Psoas muscle (tissue), 8 donors: ENCODE measurements at regions of chr13 and their contacts with region 1.

Region 1: GRCh38 chr13:24693862-24694471 is 13.8 kb downstream of the ATP12A start:
- DNase-seq: peak in 1 of 2 donors; percentile 36
- ATAC-seq: peak; percentile 58 to 82 (median 81)
- H3K4me3 ChIP-seq: no peak overlapping the region
- H3K27ac ChIP-seq: no peak overlapping the region
- H3K4me1 ChIP-seq: no peaks in the 10 kb centered on the region
- H3K27me3 ChIP-seq: peaks cover 0 to 12% (median 0%) of the 10 kb centered on the region in 3 donors
- CTCF ChIP-seq: peak; percentile 62

Region 2: DNA sequence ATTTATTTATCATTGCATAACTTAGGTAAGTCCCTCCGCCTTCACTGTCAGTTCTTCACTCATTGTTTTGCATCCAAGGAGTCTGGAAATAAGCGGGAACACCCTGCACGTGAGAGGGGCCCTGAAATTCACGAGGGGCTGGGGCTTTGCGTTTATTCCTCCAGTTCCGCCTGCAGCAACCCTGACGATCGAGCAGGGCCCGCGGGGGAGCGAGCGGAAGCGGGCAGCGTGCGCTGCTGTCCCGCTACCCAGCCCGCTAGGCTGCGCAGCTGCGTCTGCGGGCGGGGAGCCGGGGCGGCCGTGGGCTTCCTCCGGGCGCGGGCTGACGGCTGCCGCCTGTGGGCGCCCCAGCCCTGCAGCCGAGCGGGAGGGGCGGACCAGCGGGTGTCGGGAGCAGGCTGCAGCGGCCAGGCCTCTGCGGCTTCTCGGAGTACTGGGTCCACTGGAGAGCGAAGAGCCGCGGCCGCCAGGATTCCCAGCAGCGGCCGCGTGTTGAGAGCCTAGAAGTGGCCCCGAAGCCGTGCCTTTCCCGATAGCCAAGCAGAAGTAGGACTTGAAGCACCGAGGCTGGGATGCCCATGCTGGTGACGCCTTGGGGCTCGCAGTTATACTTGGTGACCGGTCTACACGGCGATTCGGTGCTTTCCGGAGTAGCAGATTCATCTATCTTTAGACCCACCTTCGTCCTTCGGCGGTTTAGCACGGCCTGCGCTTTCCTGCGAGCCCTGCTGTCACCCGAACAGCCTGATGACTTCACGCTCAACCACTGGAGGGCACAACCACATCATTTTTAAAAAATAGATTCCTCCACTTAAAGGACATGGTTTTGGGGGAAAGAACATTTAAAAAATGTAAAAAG is 1227.6 kb before region 1 on chr13:
- intact Hi-C with region 1: no loop called
- DNase-seq: peak; percentile 71 to 84
- ATAC-seq: peak; percentile 92 to 94 (median 92)
- H3K4me3 ChIP-seq: peak overlapping the region; percentile 68
- H3K27ac ChIP-seq: peak overlapping the region; percentile 87
- H3K4me1 ChIP-seq: peaks cover 24% of the 10 kb centered on the region
- H3K27me3 ChIP-seq: no peaks in the 10 kb centered on the region
- CTCF ChIP-seq: peak; percentile 60

Region 3: GRCh38 chr13:24473686-24474085 is 220.3 kb before region 1 on chr13:
- intact Hi-C with region 1: no loop called
- DNase-seq: no peak
- ATAC-seq: no peak
- H3K4me3 ChIP-seq: no peak overlapping the region
- H3K27ac ChIP-seq: no peak overlapping the region
- H3K4me1 ChIP-seq: no peaks in the 10 kb centered on the region
- H3K27me3 ChIP-seq: no peaks in the 10 kb centered on the region
- CTCF ChIP-seq: no peak

Region 4: DNA sequence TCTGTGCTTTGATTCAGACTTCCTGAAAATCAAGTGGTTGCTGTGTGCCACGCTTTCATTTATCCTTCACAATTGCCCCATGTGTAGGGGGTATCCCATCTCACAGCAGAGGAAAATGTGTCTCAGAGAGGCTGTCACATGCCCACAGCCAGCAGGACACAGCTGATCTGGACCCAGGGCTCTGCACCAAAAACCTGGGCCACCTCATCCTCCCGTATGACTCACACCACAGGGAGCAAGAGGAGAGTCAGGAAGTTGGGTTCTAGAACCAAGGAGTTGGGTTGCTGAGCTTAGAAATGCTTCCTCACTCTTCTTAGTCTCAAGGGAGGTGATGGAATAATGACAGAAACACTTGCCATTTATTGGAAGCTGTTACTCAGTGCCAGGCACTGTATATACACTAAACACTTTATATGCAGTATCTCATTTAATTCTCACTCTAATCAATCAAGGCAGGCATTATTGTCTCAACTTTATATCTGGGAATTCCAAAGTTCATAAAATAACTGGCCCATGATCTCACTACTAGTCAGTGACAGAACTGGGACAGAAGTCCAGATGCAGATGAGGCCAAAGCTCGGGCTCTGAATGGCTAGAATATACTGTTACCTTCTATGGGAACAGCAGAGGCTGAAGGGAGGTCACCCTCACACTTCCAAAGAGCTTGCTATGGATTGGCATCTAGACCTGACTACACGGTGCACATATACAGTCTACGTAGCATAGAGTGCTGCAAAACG is 61.4 kb before region 1 on chr13:
- intact Hi-C with region 1: loop called in 1 of 2 experiments (anchors 1 kb)
- DNase-seq: no peak
- ATAC-seq: no peak
- H3K4me3 ChIP-seq: no peak overlapping the region
- H3K27ac ChIP-seq: no peak overlapping the region
- H3K4me1 ChIP-seq: no peaks in the 10 kb centered on the region
- H3K27me3 ChIP-seq: no peaks in the 10 kb centered on the region
- CTCF ChIP-seq: no peak

Region 5: DNA sequence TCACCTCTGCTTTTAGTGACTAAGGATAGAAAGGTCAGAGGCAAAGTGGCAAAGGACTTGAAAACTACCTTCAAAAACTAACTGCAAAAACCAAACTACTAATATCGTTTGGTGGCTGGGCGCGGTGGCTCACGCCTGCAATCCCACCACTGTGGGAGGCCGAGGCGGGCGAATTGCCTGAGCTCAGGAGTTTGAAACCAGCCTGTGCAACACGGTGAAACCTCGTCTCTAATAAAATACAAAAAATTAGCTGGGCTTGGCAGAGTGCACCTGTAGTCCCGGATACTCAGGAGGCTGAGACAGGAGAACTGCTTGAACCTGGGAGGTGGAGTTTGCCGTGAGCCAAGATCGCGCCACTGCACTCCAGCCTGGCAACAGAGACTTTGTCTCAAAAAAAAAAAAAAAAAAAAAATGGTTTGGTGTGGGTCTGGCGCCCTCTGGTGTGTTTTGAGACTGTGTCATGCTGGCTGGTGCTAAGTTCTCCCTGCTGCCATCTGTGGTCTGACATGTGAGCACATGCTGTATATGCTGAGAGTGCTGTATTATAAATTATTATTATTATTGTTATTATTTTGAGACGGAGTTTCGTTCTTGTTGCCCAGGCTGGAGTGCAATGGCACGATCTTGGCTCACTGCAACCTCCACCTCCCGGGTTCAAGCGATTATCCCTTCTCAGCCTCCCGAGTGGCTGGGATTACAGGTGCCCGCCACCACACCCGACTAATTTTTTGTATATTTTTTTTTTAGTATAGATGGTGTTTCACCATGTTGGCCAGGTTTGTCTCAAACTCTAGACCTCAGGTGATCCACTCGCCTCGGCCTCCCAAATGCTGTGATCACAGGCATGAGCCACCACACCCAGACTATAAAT is 34.0 kb after region 1 on chr13:
- intact Hi-C with region 1: loop called (anchors 2 to 5 kb)
- DNase-seq: no peak
- ATAC-seq: peak; percentile 88 to 97 (median 95)
- H3K4me3 ChIP-seq: no peak overlapping the region
- H3K27ac ChIP-seq: no peak overlapping the region
- H3K4me1 ChIP-seq: no peaks in the 10 kb centered on the region
- H3K27me3 ChIP-seq: peaks cover 0 to 8% (median 0%) of the 10 kb centered on the region in 3 donors
- CTCF ChIP-seq: peak; percentile 72

Region 6: DNA sequence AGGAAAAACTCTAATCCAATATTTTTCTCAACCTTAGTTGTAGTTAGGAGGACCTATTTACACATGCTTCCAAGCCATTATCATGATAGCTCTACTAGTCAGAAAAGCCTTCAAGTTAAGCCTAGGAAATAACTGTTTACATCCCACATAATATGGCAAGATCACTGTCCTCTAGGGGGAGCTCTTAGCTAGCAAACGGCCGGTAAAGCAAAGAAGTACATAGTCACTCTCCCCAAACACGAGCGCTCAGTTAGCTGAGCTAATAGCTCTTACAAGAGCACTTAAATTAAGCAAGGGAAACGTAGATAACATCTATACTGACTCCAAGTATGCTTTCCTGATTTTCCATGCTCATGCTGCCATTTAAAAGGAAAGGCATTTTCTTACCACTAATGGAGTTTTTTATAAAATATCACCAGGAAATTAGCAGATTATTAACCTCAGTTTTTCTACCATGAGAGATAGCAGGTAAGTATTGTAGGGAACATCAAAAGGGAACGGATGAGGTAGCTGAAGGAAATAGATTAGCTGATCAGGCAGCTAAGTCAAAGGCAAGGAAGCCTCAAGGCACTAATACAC is 301.3 kb after region 1 on chr13:
- intact Hi-C with region 1: loop called in 1 of 2 experiments (anchors 5 kb)
- DNase-seq: no peak
- ATAC-seq: peak in 3 of 4 donors; percentile 61 to 83 (median 77)
- H3K4me3 ChIP-seq: no peak overlapping the region
- H3K27ac ChIP-seq: no peak overlapping the region
- H3K4me1 ChIP-seq: no peaks in the 10 kb centered on the region
- H3K27me3 ChIP-seq: peaks cover 0 to 3% (median 0%) of the 10 kb centered on the region in 3 donors
- CTCF ChIP-seq: peak; percentile 69